ENCODE measurements at regions of chr5 and their contacts with region 1.

Region 1: GRCh38 chr5:35830587-35830986 is 26.1 kb upstream of the IL7R start:
- DNase-seq: peak; percentile 80 to 90 (median 85)
- H3K4me3 ChIP-seq: peak overlapping the region in 1 of 2 donors; percentile 41
- H3K4me3 Mint-ChIP-seq: peak overlapping the region; percentile 21 to 72 (median 56)
- H3K27ac ChIP-seq: peak overlapping the region; percentile 45
- H3K27ac Mint-ChIP-seq: peak overlapping the region; percentile 57 to 99 (median 84)
- H3K4me1 ChIP-seq: peaks cover 97% of the 10 kb centered on the region
- H3K4me1 Mint-ChIP-seq: peaks cover 67 to 96% (median 88%) of the 10 kb centered on the region in 4 donors
- H3K27me3 ChIP-seq: no peaks in the 10 kb centered on the region
- H3K27me3 Mint-ChIP-seq: no peaks in the 10 kb centered on the region

Region 2: GRCh38 chr5:35794684-35795375 is 35.8 kb before region 1 on chr5:
- CTCF ChIA-PET with region 1: no interaction called
- POLR2A ChIA-PET with region 1: interaction called, 21 read pairs
- intact Hi-C with region 1: no loop called
- DNase-seq: no peak
- H3K4me3 ChIP-seq: peak overlapping the region in 1 of 2 donors; percentile 22
- H3K4me3 Mint-ChIP-seq: peak overlapping the region; percentile 33 to 89 (median 60)
- H3K27ac ChIP-seq: peak overlapping the region; percentile 12
- H3K27ac Mint-ChIP-seq: peak overlapping the region; percentile 84 to 97 (median 89)
- H3K4me1 ChIP-seq: peaks cover 88% of the 10 kb centered on the region
- H3K4me1 Mint-ChIP-seq: peaks cover 57 to 92% (median 78%) of the 10 kb centered on the region in 4 donors
- H3K27me3 ChIP-seq: no peaks in the 10 kb centered on the region
- H3K27me3 Mint-ChIP-seq: no peaks in the 10 kb centered on the region

Region 3: GRCh38 chr5:35869685-35870277 is 39.2 kb after region 1 on chr5:
- CTCF ChIA-PET with region 1: no interaction called
- POLR2A ChIA-PET with region 1: interaction called, 2,275 read pairs
- intact Hi-C with region 1: no loop called
- DNase-seq: no peak
- H3K4me3 ChIP-seq: no peak overlapping the region
- H3K4me3 Mint-ChIP-seq: peak overlapping the region in 7 of 8 donors; percentile 25 to 96 (median 61)
- H3K27ac ChIP-seq: peak overlapping the region; percentile 33
- H3K27ac Mint-ChIP-seq: peak overlapping the region; percentile 65 to 94 (median 86)
- H3K4me1 ChIP-seq: peaks cover 75% of the 10 kb centered on the region
- H3K4me1 Mint-ChIP-seq: peaks cover 68 to 88% (median 79%) of the 10 kb centered on the region in 4 donors
- H3K27me3 ChIP-seq: no peaks in the 10 kb centered on the region
- H3K27me3 Mint-ChIP-seq: no peaks in the 10 kb centered on the region